Sigmoid colon (tissue), 7 donors: ENCODE measurements at regions of chr17 and their contacts with region 1.

Region 1: GRCh38 chr17:42112552-42113176 is at the start of gene DHX58:
- DNase-seq: peak; percentile 91
- H3K4me3 ChIP-seq: peak within 1 kb of the TSS; percentile 48 to 63 (median 61)
- H3K27ac ChIP-seq: peak within 1 kb of the TSS; percentile 90 to 96 (median 92)
- H3K4me1 ChIP-seq: peaks cover 0 to 29% (median 24%) of the 10 kb centered on the region in 4 donors
- H3K27me3 ChIP-seq: no peaks in the 10 kb centered on the region
- CTCF ChIP-seq: no peak
- EP300 ChIP-seq: no peak
- POLR2A ChIP-seq: peak; percentile 50 to 60
- total RNA-seq, gene DHX58: 8.9 to 16.3 (median 14.6) TPM

Region 2: GRCh38 chr17:42027961-42028790 is 84.5 kb before region 1 on chr17:
- intact Hi-C with region 1: loop called (anchors 2 kb)
- DNase-seq: no peak
- H3K4me3 ChIP-seq: no peak overlapping the region
- H3K27ac ChIP-seq: no peak overlapping the region
- H3K4me1 ChIP-seq: peaks cover 0 to 13% (median 5%) of the 10 kb centered on the region in 4 donors
- H3K27me3 ChIP-seq: peaks cover 0 to 36% (median 19%) of the 10 kb centered on the region in 3 donors
- CTCF ChIP-seq: no peak
- EP300 ChIP-seq: no peak
- POLR2A ChIP-seq: no peak

Region 3: DNA sequence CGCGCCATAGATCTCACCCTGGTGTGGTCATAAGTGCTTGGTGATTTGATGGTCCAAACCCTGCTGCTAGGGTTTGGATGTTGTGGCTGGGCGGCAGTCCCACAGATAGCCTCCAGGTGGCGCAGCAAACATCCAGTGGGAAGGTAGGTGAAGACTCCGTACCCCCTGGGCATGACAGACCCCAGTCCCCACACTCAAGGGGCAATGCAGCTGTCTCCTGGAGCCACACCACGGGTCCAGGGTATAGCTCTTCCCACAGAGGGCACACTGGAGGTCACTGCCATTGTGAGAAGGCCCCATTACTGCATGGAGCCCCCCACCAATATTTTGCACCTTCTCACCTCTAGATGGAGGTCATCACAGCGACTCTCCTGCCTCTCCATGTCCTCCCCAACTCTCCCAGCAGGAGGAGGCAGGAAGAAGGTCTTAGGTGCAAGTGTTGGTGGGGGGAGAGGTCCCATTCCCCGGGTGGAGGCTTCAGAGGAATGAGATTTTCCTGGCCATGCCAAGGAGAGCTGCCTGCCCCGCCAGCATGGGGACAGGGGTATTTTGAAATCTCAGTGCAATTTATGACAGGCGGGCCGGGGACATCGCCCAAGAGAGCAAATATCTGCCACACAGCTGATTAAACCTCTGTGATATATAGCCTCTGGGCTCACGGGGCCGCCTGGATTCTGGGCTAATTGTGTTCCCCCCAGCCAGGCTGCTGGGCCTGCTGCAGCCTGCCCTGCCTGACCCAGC is 45.1 kb before region 1 on chr17:
- intact Hi-C with region 1: loop called (anchors 1 kb)
- DNase-seq: peak; percentile 75
- H3K4me3 ChIP-seq: no peak overlapping the region
- H3K27ac ChIP-seq: no peak overlapping the region
- H3K4me1 ChIP-seq: peaks cover 0 to 8% (median 7%) of the 10 kb centered on the region in 4 donors
- H3K27me3 ChIP-seq: peaks cover 8 to 41% (median 21%) of the 10 kb centered on the region in 3 donors
- CTCF ChIP-seq: peak; percentile 78 to 94 (median 83)
- EP300 ChIP-seq: no peak
- POLR2A ChIP-seq: no peak